Astrocyte of the cerebellum (primary cell): ENCODE measurements at regions of chr3 and their contacts with region 1.

Region 1: DNA sequence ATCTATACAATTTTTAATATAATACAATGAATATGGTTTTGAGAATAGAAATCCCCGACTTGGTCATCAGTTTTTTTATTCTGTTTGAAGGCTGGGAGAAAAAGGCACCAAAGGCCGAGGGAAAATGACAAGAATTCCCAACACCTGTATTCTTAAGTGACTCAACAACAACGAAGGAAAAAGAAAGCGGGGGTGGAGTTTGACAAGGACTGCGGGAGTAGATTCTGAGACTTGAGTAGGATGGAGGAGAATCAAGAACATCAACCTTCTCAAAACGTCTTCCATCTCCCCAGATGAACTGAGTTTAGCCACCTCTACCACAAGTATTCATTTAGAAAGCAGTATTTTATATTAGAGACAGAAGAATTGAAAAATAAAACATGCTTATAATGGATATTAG is 107.2 kb downstream of the IGSF11 start:
- DNase-seq: no peak
- H3K4me3 ChIP-seq: no peak overlapping the region
- CTCF ChIP-seq: no peak

Region 2: GRCh38 chr3:118850687-118851086 is 76.8 kb before region 1 on chr3:
- in situ Hi-C with region 1: loop called (anchors 10 kb)
- DNase-seq: no peak
- H3K4me3 ChIP-seq: no peak overlapping the region
- CTCF ChIP-seq: no peak